Sciatic nerve (tissue), 2 donors: ENCODE measurements at regions of chr10 and their contacts with region 1.

Region 1: DNA sequence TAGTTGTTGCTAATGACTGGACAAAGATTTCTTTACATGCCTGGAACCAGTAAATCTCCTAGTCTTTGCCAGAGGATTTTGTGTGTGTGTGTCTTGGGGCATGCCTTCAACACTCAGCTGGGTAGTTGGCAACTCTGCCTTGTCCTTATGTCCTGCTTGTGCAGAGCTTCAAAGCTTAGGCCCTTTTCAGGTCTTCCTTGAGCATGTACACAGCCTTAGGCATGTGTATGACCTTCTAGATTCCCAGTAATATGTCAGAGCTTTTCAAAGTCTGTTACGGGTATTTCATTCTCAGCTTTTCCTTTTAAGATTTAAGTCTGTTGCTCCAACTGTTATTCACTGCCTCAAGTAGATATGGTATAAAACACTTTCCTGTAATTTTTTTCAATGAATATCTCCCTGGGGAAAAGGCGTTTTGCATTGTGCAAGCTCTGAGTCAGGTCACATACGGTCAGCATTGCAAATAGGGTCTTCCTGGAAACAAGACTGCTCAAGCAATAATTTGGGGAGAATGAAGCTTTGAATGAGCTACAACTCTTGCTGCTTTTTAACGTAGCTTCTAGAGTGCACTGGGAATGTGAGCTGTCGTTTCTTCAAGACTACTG is 25.5 kb downstream of the SHOC2 start:
- DNase-seq: no peak
- ATAC-seq: peak; percentile 64

Region 2: GRCh38 chr10:110916554-110917346 is 28.1 kb before region 1 on chr10:
- intact Hi-C with region 1: no loop called
- DNase-seq: no peak
- ATAC-seq: no peak

Region 3: DNA sequence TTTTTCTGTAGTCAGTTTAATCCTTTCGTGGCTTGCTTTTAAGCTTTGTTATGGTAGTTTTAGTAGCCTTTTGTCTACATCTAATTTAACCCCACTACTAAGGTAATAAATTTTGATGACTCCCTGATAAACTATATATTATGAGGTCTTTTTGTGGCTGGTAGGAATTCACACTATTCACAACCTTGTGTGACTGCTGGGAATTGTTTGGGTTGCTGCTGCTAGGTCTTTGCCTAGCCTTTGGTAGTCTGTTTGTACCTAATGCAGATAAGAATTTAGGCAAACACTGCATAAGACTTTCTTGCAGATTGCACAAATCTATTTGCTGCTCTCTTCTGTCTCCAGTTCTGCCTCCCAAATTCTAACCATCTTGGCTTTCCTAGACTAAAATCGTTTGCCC is 32.8 kb after region 1 on chr10:
- intact Hi-C with region 1: loop called (anchors 5 kb)
- DNase-seq: no peak
- ATAC-seq: no peak

Region 4: GRCh38 chr10:111076191-111076681 is 131.3 kb after region 1 on chr10:
- intact Hi-C with region 1: no loop called
- DNase-seq: peak; percentile 82
- ATAC-seq: peak; percentile 93